ENCODE measurements at regions of chr6 and their contacts with region 1.

Region 1: GRCh38 chr6:44475779-44476434 is 88.4 kb downstream of the CDC5L start:
- DNase-seq: peak; percentile 92
- H3K4me3 ChIP-seq: peak overlapping the region in 1 of 8 donors; percentile 20
- H3K27ac ChIP-seq: no peak overlapping the region
- H3K4me1 ChIP-seq: peaks cover 6 to 10% (median 8%) of the 10 kb centered on the region in 6 donors
- H3K27me3 ChIP-seq: peaks cover 0 to 35% (median 0%) of the 10 kb centered on the region in 7 donors
- CTCF ChIP-seq: peak; percentile 54 to 89 (median 86)
- POLR2A ChIP-seq: no peak

Region 2: GRCh38 chr6:44312901-44313788 is 162.8 kb before region 1 on chr6 and contains the start of gene AARS2:
- intact Hi-C with region 1: no loop called
- DNase-seq: peak; percentile 96
- H3K4me3 ChIP-seq: peak within 1 kb of the TSS; percentile 63 to 98 (median 88)
- H3K27ac ChIP-seq: peak within 1 kb of the TSS; percentile 84 to 92 (median 88)
- H3K4me1 ChIP-seq: peaks cover 6 to 21% (median 15%) of the 10 kb centered on the region in 6 donors
- H3K27me3 ChIP-seq: peaks cover 0 to 7% (median 0%) of the 10 kb centered on the region in 7 donors
- CTCF ChIP-seq: peak; percentile 78 to 99 (median 98)
- POLR2A ChIP-seq: peak in 2 of 3 donors; percentile 62
- total RNA-seq, gene AARS2: 11.0 to 16.8 (median 14.6) TPM

Region 3: GRCh38 chr6:44327096-44327495 is 148.8 kb before region 1 on chr6:
- intact Hi-C with region 1: no loop called
- DNase-seq: no peak
- H3K4me3 ChIP-seq: no peak overlapping the region
- H3K27ac ChIP-seq: no peak overlapping the region
- H3K4me1 ChIP-seq: no peaks in the 10 kb centered on the region
- H3K27me3 ChIP-seq: peaks cover 0 to 28% (median 14%) of the 10 kb centered on the region in 7 donors
- CTCF ChIP-seq: no peak
- POLR2A ChIP-seq: no peak

Region 4: DNA sequence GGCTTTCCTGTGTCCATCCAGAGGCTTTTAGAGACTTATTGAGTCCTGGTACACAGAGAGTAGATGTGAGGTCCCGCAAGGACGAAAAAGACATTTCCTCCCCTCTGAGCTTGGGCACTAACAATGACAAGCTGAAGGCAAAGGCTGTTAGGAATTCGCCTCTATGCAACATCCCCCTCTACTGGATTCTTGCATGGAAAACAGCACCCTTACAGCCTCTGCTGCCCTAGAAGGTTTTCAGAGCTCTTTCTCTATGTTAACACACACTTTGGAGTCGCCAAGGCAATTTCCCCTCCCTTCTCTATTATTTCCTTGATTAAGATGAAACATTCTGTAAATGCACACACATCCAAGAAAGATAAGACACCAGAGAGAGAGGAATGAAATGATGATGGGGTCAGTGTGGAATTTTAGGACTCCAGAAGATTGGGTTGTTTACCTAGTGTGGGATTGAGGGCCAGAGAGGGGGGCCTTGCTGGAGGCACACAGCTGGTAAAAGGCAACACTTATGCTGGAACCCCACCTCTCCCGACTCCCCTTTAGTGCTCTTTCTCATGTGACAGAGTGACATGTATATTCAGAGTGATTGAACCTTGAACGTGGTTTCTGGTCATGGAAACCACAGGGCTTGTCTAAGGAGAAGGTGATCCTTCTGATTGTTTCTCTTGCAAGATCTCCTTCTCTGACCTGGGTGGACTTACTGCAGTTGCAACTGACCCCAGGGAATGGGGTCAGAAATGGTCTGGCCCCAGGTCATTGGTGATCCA is 1239.0 kb after region 1 on chr6:
- intact Hi-C with region 1: loop called (anchors 10 kb)
- DNase-seq: no peak
- H3K4me3 ChIP-seq: no peak overlapping the region
- H3K27ac ChIP-seq: no peak overlapping the region
- H3K4me1 ChIP-seq: peaks cover 0 to 20% (median 5%) of the 10 kb centered on the region in 6 donors
- H3K27me3 ChIP-seq: peaks cover 0 to 15% (median 0%) of the 10 kb centered on the region in 7 donors
- CTCF ChIP-seq: peak; percentile 51 to 84 (median 68)
- POLR2A ChIP-seq: no peak

Region 5: GRCh38 chr6:45922728-45923351 is 1446.9 kb after region 1 on chr6:
- intact Hi-C with region 1: loop called (anchors 10 kb)
- DNase-seq: peak; percentile 85
- H3K4me3 ChIP-seq: no peak overlapping the region
- H3K27ac ChIP-seq: peak overlapping the region in 4 of 8 donors; percentile 3 to 41 (median 25)
- H3K4me1 ChIP-seq: peaks cover 0 to 21% (median 8%) of the 10 kb centered on the region in 6 donors
- H3K27me3 ChIP-seq: peaks cover 0 to 3% (median 0%) of the 10 kb centered on the region in 7 donors
- CTCF ChIP-seq: peak; percentile 16 to 78 (median 54)
- POLR2A ChIP-seq: no peak

Measured in spleen (tissue), 13 donors.